Body of pancreas (tissue), 4 donors: ENCODE measurements at regions of chr10 and their contacts with region 1.

Region 1: DNA sequence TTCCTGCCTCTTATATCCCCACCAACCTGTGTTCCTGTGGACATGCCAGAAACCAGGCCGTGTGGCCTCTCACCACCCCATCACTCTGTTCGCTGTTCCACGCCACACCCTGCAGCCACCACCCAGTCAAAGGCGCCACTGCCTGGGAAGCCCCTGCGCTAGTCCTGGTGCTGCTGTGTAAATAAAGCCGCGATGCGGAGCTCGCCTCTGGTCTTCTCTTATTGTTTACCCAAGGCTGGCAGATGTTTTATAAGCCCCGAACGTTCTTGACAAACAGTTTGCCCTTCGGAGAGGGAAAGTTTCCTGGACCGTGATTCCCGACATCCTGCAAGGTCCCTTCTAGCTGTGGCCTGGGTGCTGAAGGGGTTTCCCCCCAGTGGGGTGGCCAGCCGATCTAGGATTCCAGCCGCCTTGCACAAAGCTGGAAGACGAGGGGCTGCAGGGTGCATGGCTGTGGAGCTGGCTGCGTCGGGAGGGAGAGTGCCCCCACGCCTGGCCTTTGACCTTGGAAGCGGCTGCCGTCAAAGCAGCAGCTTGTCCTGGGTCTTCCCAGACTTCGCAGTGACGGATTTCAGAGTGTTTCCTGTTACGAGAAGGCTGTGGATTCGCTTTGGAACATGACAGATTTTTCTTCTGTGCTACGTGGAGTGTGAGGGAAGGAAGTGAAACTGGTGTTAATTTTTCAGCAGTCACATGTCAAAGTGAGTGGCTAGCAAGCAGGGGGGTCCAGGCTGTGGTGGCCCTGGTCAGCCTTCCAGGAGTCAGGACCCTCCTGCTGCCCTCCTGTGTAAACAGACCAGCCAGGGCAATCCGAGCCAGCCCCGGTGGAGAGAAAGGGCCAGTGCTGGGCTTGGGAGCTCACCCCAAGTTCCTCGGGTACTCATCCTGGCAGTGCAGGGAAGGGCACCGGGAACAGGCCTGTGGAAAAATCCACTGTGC is 61.6 kb downstream of the LHPP start:
- DNase-seq: peak in 1 of 4 donors; percentile 48
- ATAC-seq: peak; percentile 16
- H3K4me3 ChIP-seq: no peak overlapping the region
- H3K27ac ChIP-seq: peak overlapping the region in 2 of 4 donors; percentile 31 to 65
- H3K4me1 ChIP-seq: peaks cover 23% of the 10 kb centered on the region
- H3K27me3 ChIP-seq: no peaks in the 10 kb centered on the region
- CTCF ChIP-seq: no peak
- POLR2A ChIP-seq: no peak

Region 2: GRCh38 chr10:124436191-124436638 is 87.0 kb before region 1 on chr10:
- intact Hi-C with region 1: no loop called
- DNase-seq: no peak
- ATAC-seq: no peak
- H3K4me3 ChIP-seq: no peak overlapping the region
- H3K27ac ChIP-seq: no peak overlapping the region
- H3K4me1 ChIP-seq: no peaks in the 10 kb centered on the region
- H3K27me3 ChIP-seq: no peaks in the 10 kb centered on the region
- CTCF ChIP-seq: no peak
- POLR2A ChIP-seq: no peak

Region 3: GRCh38 chr10:124827474-124827873 is 304.3 kb after region 1 on chr10:
- intact Hi-C with region 1: loop called (anchors 10 kb)
- DNase-seq: no peak
- ATAC-seq: no peak
- H3K4me3 ChIP-seq: no peak overlapping the region
- H3K27ac ChIP-seq: no peak overlapping the region
- H3K4me1 ChIP-seq: no peaks in the 10 kb centered on the region
- H3K27me3 ChIP-seq: no peaks in the 10 kb centered on the region
- CTCF ChIP-seq: peak; percentile 10 to 64 (median 41)
- POLR2A ChIP-seq: no peak